ENCODE measurements at regions of chr19 and their contacts with region 1.

Region 1: DNA sequence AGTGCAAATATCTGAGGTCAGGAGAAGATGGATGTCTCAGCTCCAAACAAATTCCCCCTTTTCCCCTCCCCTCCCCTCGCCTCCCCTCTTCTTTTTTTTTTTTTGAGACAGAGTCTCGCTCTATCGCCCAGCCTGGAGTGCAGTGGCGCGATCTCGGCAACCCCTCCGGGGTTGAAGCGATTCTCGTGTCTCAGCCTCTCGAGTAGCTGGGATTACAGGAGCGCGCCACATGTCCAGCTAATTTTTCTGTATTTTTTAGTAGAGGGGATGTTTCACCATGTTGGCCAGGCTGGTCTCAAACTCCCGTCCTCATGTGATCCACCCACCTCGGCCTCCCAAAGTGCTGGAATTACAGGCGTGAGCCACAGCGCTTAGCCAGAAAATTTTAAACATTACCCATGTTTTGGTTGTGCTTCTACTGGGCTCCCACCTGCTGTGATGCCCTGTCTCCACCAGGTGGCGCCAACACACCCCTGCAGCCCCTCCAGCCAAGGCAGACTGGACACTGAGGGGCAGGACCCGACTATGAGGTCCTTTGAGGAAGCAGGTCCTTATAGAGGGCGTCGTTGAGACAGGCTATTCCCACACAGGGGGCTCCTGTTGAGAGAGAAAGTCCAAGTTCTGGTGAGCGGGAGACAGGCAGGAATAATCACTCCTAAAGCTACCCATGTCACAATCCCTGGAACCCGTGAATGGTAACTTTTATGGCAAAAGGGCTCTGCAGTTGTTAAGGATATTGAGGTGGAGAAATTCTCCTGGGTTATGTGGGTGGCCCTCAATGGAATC is 6.3 kb downstream of the ERICH4 start:
- DNase-seq: peak; percentile 84 to 98
- ATAC-seq: peak; percentile 89 to 97
- H3K4me3 ChIP-seq: peak overlapping the region; percentile 26
- H3K27ac ChIP-seq: peak overlapping the region in 1 of 2 experiments; percentile 5; a peak in 1 of 6 replicates
- H3K4me1 ChIP-seq: 0 out of 3 replicates have a peak, but pooled peaks cover 3% of the 10 kb centered on the region
- CTCF ChIP-seq: peak; percentile 100
- EP300 ChIP-seq: no peak
- POLR2A ChIP-seq: no peak
- RAD21 ChIP-seq: peak; percentile 99 to 100

Region 2: GRCh38 chr19:41409288-41409687 is 40.0 kb before region 1 on chr19:
- CTCF ChIA-PET with region 1: interaction called, 20 read pairs
- POLR2A ChIA-PET with region 1: no interaction called
- DNase-seq: peak; percentile 55 to 60
- ATAC-seq: peak; percentile 55 to 58; a peak in 5 of 6 replicates
- H3K4me3 ChIP-seq: no peak overlapping the region
- H3K27ac ChIP-seq: no peak overlapping the region
- H3K4me1 ChIP-seq: peaks cover 12% of the 10 kb centered on the region
- CTCF ChIP-seq: no peak
- EP300 ChIP-seq: no peak
- POLR2A ChIP-seq: no peak
- RAD21 ChIP-seq: no peak

Region 3: GRCh38 chr19:41484822-41485221 is 35.5 kb after region 1 on chr19:
- CTCF ChIA-PET with region 1: interaction called, 45 read pairs
- POLR2A ChIA-PET with region 1: no interaction called
- DNase-seq: no peak
- ATAC-seq: no peak
- H3K4me3 ChIP-seq: no peak overlapping the region
- H3K27ac ChIP-seq: no peak overlapping the region
- H3K4me1 ChIP-seq: no peaks in the 10 kb centered on the region
- CTCF ChIP-seq: no peak
- EP300 ChIP-seq: no peak
- POLR2A ChIP-seq: no peak
- RAD21 ChIP-seq: no peak

Region 4: DNA sequence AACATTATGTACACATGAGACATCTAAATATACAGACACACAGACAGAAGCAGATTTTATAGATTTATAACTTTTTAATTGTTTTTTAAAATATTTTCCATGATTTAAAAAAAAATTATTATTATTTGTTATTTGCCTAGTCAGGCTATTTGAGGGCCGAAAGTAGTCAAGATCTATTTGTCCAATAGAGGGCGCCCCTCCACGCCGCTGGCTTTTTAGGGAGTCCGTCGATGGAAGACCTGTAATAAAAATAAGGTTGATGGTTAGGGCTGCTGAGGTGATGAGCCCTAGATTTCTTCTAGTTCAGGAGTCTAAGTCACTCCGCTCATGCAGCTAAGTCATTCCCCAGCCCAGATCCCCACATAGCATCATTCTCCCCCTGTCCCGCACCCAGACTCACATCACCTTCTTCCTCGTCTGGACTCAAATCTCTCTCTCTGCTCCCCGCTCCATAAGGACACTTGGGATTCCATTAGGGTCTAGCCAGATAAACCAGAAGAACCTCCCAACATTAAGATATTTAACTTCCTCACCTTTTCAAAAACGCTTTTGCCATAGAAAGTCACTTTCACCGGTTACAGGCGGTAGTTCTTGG is 92.8 kb after region 1 on chr19:
- CTCF ChIA-PET with region 1: interaction called, 169 read pairs
- POLR2A ChIA-PET with region 1: no interaction called
- DNase-seq: peak; percentile 69 to 73
- ATAC-seq: peak; percentile 44 to 69; a peak in 4 of 6 replicates
- H3K4me3 ChIP-seq: no peak overlapping the region
- H3K27ac ChIP-seq: no peak overlapping the region
- H3K4me1 ChIP-seq: no peaks in the 10 kb centered on the region
- CTCF ChIP-seq: peak; percentile 88
- EP300 ChIP-seq: no peak
- POLR2A ChIP-seq: no peak
- RAD21 ChIP-seq: peak; percentile 33 to 54; a peak in 4 of 5 replicates

Region 5: GRCh38 chr19:41606215-41606837 is 157.1 kb after region 1 on chr19:
- CTCF ChIA-PET with region 1: interaction called, 26 read pairs
- POLR2A ChIA-PET with region 1: no interaction called
- DNase-seq: no peak
- ATAC-seq: no peak; a peak in 1 of 6 replicates
- H3K4me3 ChIP-seq: no peak overlapping the region
- H3K27ac ChIP-seq: no peak overlapping the region
- H3K4me1 ChIP-seq: no peaks in the 10 kb centered on the region
- CTCF ChIP-seq: no peak
- EP300 ChIP-seq: no peak
- POLR2A ChIP-seq: no peak
- RAD21 ChIP-seq: no peak